ENCODE measurements at regions of chr18 and their contacts with region 1.

Region 1: DNA sequence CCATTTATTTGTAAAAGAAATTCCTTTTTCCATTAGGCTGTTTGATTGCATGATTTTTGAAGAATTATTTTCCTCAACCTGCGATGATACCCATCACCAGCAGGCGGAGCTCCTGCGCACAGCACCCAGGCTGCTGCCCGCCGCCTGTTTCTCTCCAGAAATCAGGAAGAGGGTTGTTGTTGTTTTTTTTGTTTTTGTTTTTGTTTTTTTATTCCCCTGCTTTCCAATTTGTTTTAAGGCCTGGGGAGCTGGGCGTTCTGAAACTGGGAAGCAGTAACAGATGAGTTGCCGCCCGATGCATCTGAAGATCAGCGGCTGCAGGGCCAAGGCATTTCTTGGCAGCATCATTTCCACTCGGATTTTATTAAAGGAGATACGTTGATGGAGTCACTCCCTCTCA is 132.1 kb downstream of the MBP start:
- DNase-seq: no peak
- ATAC-seq: peak; percentile 69
- H3K4me3 ChIP-seq: no peak overlapping the region
- H3K27ac ChIP-seq: no peak overlapping the region
- H3K4me1 ChIP-seq: no peaks in the 10 kb centered on the region
- H3K27me3 ChIP-seq: no peaks in the 10 kb centered on the region
- CTCF ChIP-seq: peak; percentile 91 to 98 (median 97)
- EP300 ChIP-seq: no peak
- POLR2A ChIP-seq: no peak
- RAD21 ChIP-seq: peak; percentile 92

Region 2: DNA sequence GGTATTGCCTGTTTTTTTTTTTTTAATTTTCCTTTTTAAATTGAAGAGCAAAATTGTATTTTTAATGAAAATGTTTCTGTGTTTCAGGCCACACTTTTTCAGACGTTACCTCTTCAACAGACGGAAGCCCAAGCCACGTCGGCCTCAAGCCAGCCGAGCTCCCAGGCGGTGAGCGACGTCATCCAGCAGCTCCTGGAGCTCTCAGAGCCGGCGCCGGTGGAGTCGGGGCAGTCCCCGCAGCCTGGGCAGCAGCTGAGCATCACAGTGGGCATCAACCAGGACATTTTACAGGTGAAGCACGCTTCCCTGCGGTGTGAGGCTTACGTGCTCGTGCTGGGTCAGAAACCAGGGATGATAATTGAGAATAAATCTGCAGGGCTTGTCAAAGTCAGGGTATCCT is 120.5 kb before region 1 on chr18:
- CTCF ChIA-PET with region 1: no interaction called
- POLR2A ChIA-PET with region 1: no interaction called
- RAD21 ChIA-PET with region 1: no interaction called
- SMC1A ChIA-PET with region 1: no interaction called
- in situ Hi-C with region 1: no loop called
- intact Hi-C with region 1: no loop called
- DNase-seq: no peak
- ATAC-seq: no peak
- H3K4me3 ChIP-seq: no peak overlapping the region
- H3K27ac ChIP-seq: no peak overlapping the region
- H3K4me1 ChIP-seq: no peaks in the 10 kb centered on the region
- H3K27me3 ChIP-seq: no peaks in the 10 kb centered on the region
- CTCF ChIP-seq: no peak
- EP300 ChIP-seq: no peak
- POLR2A ChIP-seq: no peak
- RAD21 ChIP-seq: no peak

Region 3: DNA sequence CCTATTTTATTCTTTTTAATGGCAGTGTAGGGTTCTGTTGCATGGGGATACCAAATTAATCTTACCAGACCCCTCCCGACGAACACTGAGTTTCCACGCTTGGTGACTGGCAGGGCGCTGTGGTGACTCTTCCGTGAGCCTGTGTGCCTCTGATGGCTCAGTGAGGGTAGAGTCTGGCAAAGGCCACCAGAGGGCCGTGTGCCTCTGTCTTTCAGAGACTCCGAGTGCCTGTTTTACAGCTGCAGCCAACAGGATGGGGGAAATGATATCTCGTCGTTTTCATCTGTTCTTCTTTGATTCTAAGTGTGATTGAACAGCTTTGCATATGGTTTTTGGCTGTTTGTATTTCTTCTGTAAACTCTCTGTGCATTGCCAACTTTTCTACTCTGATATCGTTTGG is 78.4 kb before region 1 on chr18:
- CTCF ChIA-PET with region 1: interaction called, 11 read pairs
- POLR2A ChIA-PET with region 1: no interaction called
- RAD21 ChIA-PET with region 1: interaction called, 7 read pairs
- SMC1A ChIA-PET with region 1: interaction called, 3 read pairs
- in situ Hi-C with region 1: no loop called
- intact Hi-C with region 1: no loop called
- DNase-seq: peak; percentile 26
- ATAC-seq: peak; percentile 100
- H3K4me3 ChIP-seq: no peak overlapping the region
- H3K27ac ChIP-seq: no peak overlapping the region
- H3K4me1 ChIP-seq: no peaks in the 10 kb centered on the region
- H3K27me3 ChIP-seq: no peaks in the 10 kb centered on the region
- CTCF ChIP-seq: peak; percentile 81 to 83 (median 81)
- EP300 ChIP-seq: peak in 1 of 2 experiments; percentile 12; a peak in 1 of 4 replicates
- POLR2A ChIP-seq: no peak
- RAD21 ChIP-seq: peak; percentile 92

Region 4: GRCh38 chr18:77061946-77062517 is 61.5 kb after region 1 on chr18:
- CTCF ChIA-PET with region 1: interaction called, 57 read pairs
- POLR2A ChIA-PET with region 1: no interaction called
- RAD21 ChIA-PET with region 1: interaction called, 7 read pairs
- SMC1A ChIA-PET with region 1: interaction called, 21 read pairs
- in situ Hi-C with region 1: no loop called
- intact Hi-C with region 1: no loop called
- DNase-seq: no peak
- ATAC-seq: peak; percentile 65
- H3K4me3 ChIP-seq: peak overlapping the region; percentile 2; the same call in 1 of the 2 replicates
- H3K27ac ChIP-seq: peak overlapping the region; percentile 97
- H3K4me1 ChIP-seq: peaks cover 61% of the 10 kb centered on the region
- H3K27me3 ChIP-seq: no peaks in the 10 kb centered on the region
- CTCF ChIP-seq: peak in 2 of 3 experiments; percentile 16 to 26; a peak in 2 of 6 replicates
- EP300 ChIP-seq: no peak
- POLR2A ChIP-seq: no peak; the same call in 1 of the 2 replicates
- RAD21 ChIP-seq: peak; percentile 24; the same call in 1 of the 2 replicates

Region 5: DNA sequence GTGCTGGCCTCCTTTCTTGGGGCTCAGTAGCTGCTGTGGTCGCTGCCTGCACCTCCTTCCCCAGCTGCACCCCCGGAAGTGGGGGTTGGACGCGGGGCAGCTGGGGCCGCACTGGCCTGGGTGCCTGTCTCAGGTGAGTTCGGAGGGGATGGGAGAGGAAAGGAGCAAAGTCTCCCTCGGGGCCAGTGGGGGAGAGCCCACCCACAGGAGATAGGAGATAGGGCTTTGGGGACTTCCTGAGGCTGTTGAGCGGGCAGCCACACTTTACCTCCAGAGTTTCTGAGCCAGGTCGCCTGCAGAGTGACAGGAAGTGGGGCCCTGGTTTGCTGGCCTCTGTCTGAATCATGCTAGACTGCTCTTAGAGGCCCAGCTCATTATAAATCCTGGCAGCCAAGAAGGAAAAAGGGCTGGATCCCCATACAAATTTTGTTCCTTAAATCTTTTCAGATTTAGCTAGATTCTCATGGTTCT is 124.0 kb after region 1 on chr18:
- CTCF ChIA-PET with region 1: interaction called, 10 read pairs
- POLR2A ChIA-PET with region 1: no interaction called
- RAD21 ChIA-PET with region 1: interaction called, 7 read pairs
- SMC1A ChIA-PET with region 1: interaction called, 5 read pairs
- in situ Hi-C with region 1: no loop called
- intact Hi-C with region 1: no loop called
- DNase-seq: peak; percentile 69
- ATAC-seq: peak; percentile 71
- H3K4me3 ChIP-seq: peak overlapping the region; percentile 72
- H3K27ac ChIP-seq: peak overlapping the region; percentile 92
- H3K4me1 ChIP-seq: peaks cover 43% of the 10 kb centered on the region
- H3K27me3 ChIP-seq: no peaks in the 10 kb centered on the region
- CTCF ChIP-seq: no peak
- EP300 ChIP-seq: 0 out of 4 replicates have a peak, but pooled peaks of 1 of the 2 experiments have one; percentile 32
- POLR2A ChIP-seq: no peak; the same call in 1 of the 2 replicates
- RAD21 ChIP-seq: no peak

Region 6: GRCh38 chr18:77329651-77330050 is 329.1 kb after region 1 on chr18:
- CTCF ChIA-PET with region 1: no interaction called
- POLR2A ChIA-PET with region 1: no interaction called
- RAD21 ChIA-PET with region 1: no interaction called
- SMC1A ChIA-PET with region 1: no interaction called
- in situ Hi-C with region 1: no loop called
- intact Hi-C with region 1: no loop called
- DNase-seq: no peak
- ATAC-seq: no peak
- H3K4me3 ChIP-seq: no peak overlapping the region
- H3K27ac ChIP-seq: no peak overlapping the region
- H3K4me1 ChIP-seq: no peaks in the 10 kb centered on the region
- H3K27me3 ChIP-seq: no peaks in the 10 kb centered on the region
- CTCF ChIP-seq: no peak
- EP300 ChIP-seq: no peak
- POLR2A ChIP-seq: no peak
- RAD21 ChIP-seq: no peak

Region 7: GRCh38 chr18:77359561-77360314 is 359.2 kb after region 1 on chr18:
- CTCF ChIA-PET with region 1: no interaction called
- POLR2A ChIA-PET with region 1: no interaction called
- RAD21 ChIA-PET with region 1: no interaction called
- SMC1A ChIA-PET with region 1: no interaction called
- in situ Hi-C with region 1: no loop called
- intact Hi-C with region 1: no loop called
- DNase-seq: no peak
- ATAC-seq: no peak
- H3K4me3 ChIP-seq: no peak overlapping the region
- H3K27ac ChIP-seq: no peak overlapping the region
- H3K4me1 ChIP-seq: no peaks in the 10 kb centered on the region
- H3K27me3 ChIP-seq: no peaks in the 10 kb centered on the region
- CTCF ChIP-seq: no peak
- EP300 ChIP-seq: no peak
- POLR2A ChIP-seq: no peak
- RAD21 ChIP-seq: no peak

Region 8: GRCh38 chr18:77650799-77651385 is 650.4 kb after region 1 on chr18:
- CTCF ChIA-PET with region 1: interaction called, 5 read pairs
- POLR2A ChIA-PET with region 1: no interaction called
- RAD21 ChIA-PET with region 1: no interaction called
- SMC1A ChIA-PET with region 1: interaction called, 3 read pairs
- in situ Hi-C with region 1: loop called (anchors 10 kb)
- intact Hi-C with region 1: loop called (anchors 5 kb)
- DNase-seq: no peak
- ATAC-seq: peak; percentile 77
- H3K4me3 ChIP-seq: no peak overlapping the region
- H3K27ac ChIP-seq: no peak overlapping the region
- H3K4me1 ChIP-seq: no peaks in the 10 kb centered on the region
- H3K27me3 ChIP-seq: no peaks in the 10 kb centered on the region
- CTCF ChIP-seq: peak; percentile 76 to 84 (median 82); a peak in 5 of 6 replicates
- EP300 ChIP-seq: no peak
- POLR2A ChIP-seq: no peak
- RAD21 ChIP-seq: peak; percentile 79

Measured in GM12878 (cell line).